ENCODE measurements at regions of chr18 and their contacts with region 1.

Region 1: DNA sequence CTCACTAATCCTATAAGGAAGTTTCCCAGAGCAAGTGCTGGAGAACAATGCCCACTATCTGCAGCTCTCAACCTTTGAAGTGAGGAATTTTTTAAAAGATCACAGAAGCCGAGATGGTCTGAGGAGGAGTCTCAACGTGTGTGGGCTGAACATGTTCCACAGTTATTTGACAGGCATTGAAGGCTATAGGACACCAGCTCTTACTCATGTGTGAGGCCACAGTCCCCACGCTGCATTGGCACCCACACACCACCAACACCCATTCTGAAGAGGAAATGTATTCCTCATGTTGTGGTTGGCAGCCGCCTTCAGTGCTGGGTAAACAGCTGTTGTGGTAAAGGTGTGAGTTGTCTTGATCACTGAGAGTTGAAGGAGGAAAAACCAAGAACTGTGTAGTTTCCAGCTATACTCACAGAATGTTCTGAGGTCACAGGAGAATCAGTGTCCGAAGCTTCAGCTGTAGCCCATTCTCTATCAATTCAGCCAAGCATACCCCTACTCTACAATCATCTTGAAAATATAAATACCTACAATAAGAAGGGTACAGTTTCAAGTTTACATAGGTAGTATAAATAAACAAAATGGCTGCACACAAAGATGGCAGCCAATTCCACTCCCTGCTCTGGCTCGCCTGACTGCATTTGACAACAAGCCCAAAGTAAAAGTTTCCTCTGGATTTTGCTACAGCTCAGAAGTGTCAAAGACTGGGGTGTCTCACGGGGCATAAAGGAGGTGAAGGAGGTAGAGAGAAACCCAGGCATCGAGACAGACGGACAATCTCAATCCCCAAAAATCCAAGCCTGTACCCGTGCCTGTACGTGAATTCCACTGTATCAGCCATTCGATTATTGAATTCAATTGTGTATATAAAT is 12.1 kb downstream of the CD226 start:
- DNase-seq: peak; percentile 56 to 90 (median 78)
- ATAC-seq: peak; percentile 96 to 100 (median 98)
- H3K4me3 ChIP-seq: peak overlapping the region; percentile 8 to 26
- H3K4me3 Mint-ChIP-seq: no peak overlapping the region
- H3K27ac ChIP-seq: peak overlapping the region; percentile 76
- H3K27ac Mint-ChIP-seq: no peak overlapping the region
- H3K4me1 ChIP-seq: peaks cover 38 to 42% of the 10 kb centered on the region in 2 experiments
- H3K4me1 Mint-ChIP-seq: peaks cover 18 to 43% (median 21%) of the 10 kb centered on the region in 3 donors
- H3K27me3 ChIP-seq: no peaks in the 10 kb centered on the region
- H3K27me3 Mint-ChIP-seq: no peaks in the 10 kb centered on the region

Region 2: DNA sequence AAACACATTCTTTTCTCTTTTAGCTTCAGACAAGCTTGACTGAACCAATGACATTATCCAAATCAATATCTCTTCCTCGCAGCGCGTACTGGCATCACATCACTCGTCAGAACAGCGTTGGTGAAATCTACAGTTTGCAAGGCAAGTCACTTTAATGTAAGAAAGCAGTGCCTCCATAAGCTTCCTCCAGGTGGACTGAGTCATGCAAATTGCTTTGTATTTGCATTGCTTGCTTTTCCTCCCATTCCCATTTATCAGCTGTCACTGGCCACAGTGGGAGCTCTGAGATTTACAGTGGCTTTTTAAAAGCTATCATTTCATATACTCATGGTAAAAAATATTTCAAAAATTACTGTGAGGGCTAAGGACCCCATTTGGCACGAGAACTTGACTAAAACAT is 177.8 kb before region 1 on chr18:
- CTCF ChIA-PET with region 1: no interaction called
- POLR2A ChIA-PET with region 1: no interaction called
- DNase-seq: no peak
- ATAC-seq: no peak
- H3K4me3 ChIP-seq: no peak overlapping the region
- H3K4me3 Mint-ChIP-seq: no peak overlapping the region
- H3K27ac ChIP-seq: no peak overlapping the region
- H3K27ac Mint-ChIP-seq: peak overlapping the region; percentile 63 to 66
- H3K4me1 ChIP-seq: peaks cover 10% of the 10 kb centered on the region in 2 experiments
- H3K4me1 Mint-ChIP-seq: peaks cover 45 to 55% (median 51%) of the 10 kb centered on the region in 3 donors
- H3K27me3 ChIP-seq: no peaks in the 10 kb centered on the region
- H3K27me3 Mint-ChIP-seq: no peaks in the 10 kb centered on the region

Region 3: GRCh38 chr18:69854455-69854854 is 81.1 kb before region 1 on chr18:
- CTCF ChIA-PET with region 1: no interaction called
- POLR2A ChIA-PET with region 1: no interaction called
- DNase-seq: no peak
- ATAC-seq: no peak
- H3K4me3 ChIP-seq: no peak overlapping the region
- H3K4me3 Mint-ChIP-seq: no peak overlapping the region
- H3K27ac ChIP-seq: no peak overlapping the region
- H3K27ac Mint-ChIP-seq: peak overlapping the region in 1 of 2 donors; percentile 24
- H3K4me1 ChIP-seq: no peaks in the 10 kb centered on the region
- H3K4me1 Mint-ChIP-seq: peaks cover 0 to 9% (median 0%) of the 10 kb centered on the region in 3 donors
- H3K27me3 ChIP-seq: no peaks in the 10 kb centered on the region
- H3K27me3 Mint-ChIP-seq: no peaks in the 10 kb centered on the region

Region 4: GRCh38 chr18:69898241-69898861 is 37.2 kb before region 1 on chr18:
- CTCF ChIA-PET with region 1: interaction called, 3 to 11 read pairs
- POLR2A ChIA-PET with region 1: interaction called, 3 to 5 read pairs
- DNase-seq: peak in 12 of 35 experiments; percentile 2 to 59 (median 14)
- ATAC-seq: peak; percentile 53 to 62 (median 55)
- H3K4me3 ChIP-seq: peak overlapping the region; percentile 28 to 46
- H3K4me3 Mint-ChIP-seq: peak overlapping the region; percentile 79 to 81 (median 79)
- H3K27ac ChIP-seq: peak overlapping the region; percentile 92
- H3K27ac Mint-ChIP-seq: peak overlapping the region; percentile 96 to 98
- H3K4me1 ChIP-seq: peaks cover 24 to 38% of the 10 kb centered on the region in 2 experiments
- H3K4me1 Mint-ChIP-seq: peaks cover 51 to 77% (median 74%) of the 10 kb centered on the region in 3 donors
- H3K27me3 ChIP-seq: no peaks in the 10 kb centered on the region
- H3K27me3 Mint-ChIP-seq: no peaks in the 10 kb centered on the region

Region 5: GRCh38 chr18:69958422-69958821 is 22.9 kb after region 1 on chr18:
- CTCF ChIA-PET with region 1: interaction called in 1 of 2 experiments, 10 read pairs
- POLR2A ChIA-PET with region 1: interaction called, 3 to 8 read pairs
- DNase-seq: peak in 1 of 35 experiments; percentile 50
- ATAC-seq: no peak
- H3K4me3 ChIP-seq: no peak overlapping the region
- H3K4me3 Mint-ChIP-seq: no peak overlapping the region
- H3K27ac ChIP-seq: peak overlapping the region; percentile 80
- H3K27ac Mint-ChIP-seq: no peak overlapping the region
- H3K4me1 ChIP-seq: peaks cover 35 to 36% of the 10 kb centered on the region in 2 experiments
- H3K4me1 Mint-ChIP-seq: peaks cover 15 to 20% (median 17%) of the 10 kb centered on the region in 3 donors
- H3K27me3 ChIP-seq: no peaks in the 10 kb centered on the region
- H3K27me3 Mint-ChIP-seq: no peaks in the 10 kb centered on the region

Measured in T-cell (primary cell).